PC-3 (cell line): ENCODE measurements at regions of chr10 and their contacts with region 1.

Region 1: GRCh38 chr10:97334370-97335175 is at the start of gene FRAT2:
- DNase-seq: peak; percentile 78
- ATAC-seq: peak; percentile 67
- H3K4me3 ChIP-seq: peak within 1 kb of the TSS; percentile 90
- H3K27ac ChIP-seq: peak within 1 kb of the TSS; percentile 81
- H3K4me1 ChIP-seq: peaks cover 24% of the 10 kb centered on the region
- H3K27me3 ChIP-seq: no peaks in the 10 kb centered on the region
- CTCF ChIP-seq: no peak
- total RNA-seq, gene FRAT2: 19.2 and 26.7 TPM in 2 replicates

Region 2: GRCh38 chr10:97278491-97278989 is 56.0 kb before region 1 on chr10:
- CTCF ChIA-PET with region 1: interaction called, 20 read pairs
- POLR2A ChIA-PET with region 1: interaction called, 10 read pairs
- intact Hi-C with region 1: loop called (anchors 2 kb)
- DNase-seq: peak; percentile 68
- ATAC-seq: peak; percentile 76
- H3K4me3 ChIP-seq: no peak overlapping the region
- H3K27ac ChIP-seq: no peak overlapping the region
- H3K4me1 ChIP-seq: peaks cover 10% of the 10 kb centered on the region
- H3K27me3 ChIP-seq: no peaks in the 10 kb centered on the region
- CTCF ChIP-seq: peak; percentile 63

Region 3: DNA sequence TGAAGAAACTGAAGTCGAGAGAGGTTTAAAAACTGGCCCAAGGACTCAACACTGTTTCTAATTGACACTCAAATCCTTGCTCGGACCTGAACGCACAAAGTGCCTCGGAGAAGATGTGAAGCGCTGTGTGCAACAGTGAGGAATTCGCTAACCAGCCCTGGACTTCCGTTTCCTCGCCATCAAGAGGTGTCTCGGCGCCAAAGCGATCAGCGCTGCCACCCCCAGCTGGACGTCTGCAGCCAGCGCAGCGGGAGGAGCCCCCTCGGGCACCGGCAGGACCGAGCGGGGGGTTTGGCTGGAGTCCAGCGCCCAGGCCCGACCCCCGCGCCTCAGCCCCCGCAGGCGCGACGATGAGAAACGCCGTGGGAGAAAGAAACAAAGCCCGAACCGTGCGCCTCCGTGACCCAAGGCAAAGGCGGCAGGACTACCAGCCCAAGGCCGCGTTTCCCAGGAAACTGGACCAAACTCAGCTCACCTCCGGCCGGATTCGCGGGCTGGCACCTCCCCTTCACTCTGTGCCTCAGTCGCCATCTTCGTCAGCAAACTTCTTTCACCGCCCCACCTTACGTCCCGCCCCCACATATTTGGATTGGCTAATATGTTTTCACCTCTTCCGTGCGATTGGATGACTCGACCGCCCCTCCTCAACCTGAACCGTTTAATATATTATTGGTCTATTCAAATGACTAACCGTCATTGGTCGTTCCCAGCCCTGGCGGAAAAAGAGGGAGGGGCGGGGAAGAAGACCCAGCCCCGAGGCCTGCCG is 42.3 kb before region 1 on chr10 and contains the start of gene ARHGAP19:
- CTCF ChIA-PET with region 1: no interaction called
- POLR2A ChIA-PET with region 1: no interaction called
- intact Hi-C with region 1: loop called (anchors 1 kb)
- DNase-seq: peak; percentile 96
- ATAC-seq: peak; percentile 93
- H3K4me3 ChIP-seq: peak within 1 kb of the TSS; percentile 86
- H3K27ac ChIP-seq: peak within 1 kb of the TSS; percentile 92
- H3K4me1 ChIP-seq: no peaks in the 10 kb centered on the region; the same call in 1 of the 2 replicates
- H3K27me3 ChIP-seq: no peaks in the 10 kb centered on the region
- CTCF ChIP-seq: peak; percentile 30; the same call in 1 of the 2 replicates
- total RNA-seq, gene ARHGAP19: 8.5 and 9.8 TPM in 2 replicates

Region 4: GRCh38 chr10:97445722-97446639 is 111.4 kb after region 1 on chr10 and contains the starts of genes EXOSC1 and ZDHHC16:
- CTCF ChIA-PET with region 1: no interaction called
- POLR2A ChIA-PET with region 1: no interaction called
- intact Hi-C with region 1: loop called (anchors 5 kb)
- DNase-seq: peak; percentile 94
- ATAC-seq: peak; percentile 97
- H3K4me3 ChIP-seq: peak within 1 kb of the TSS; percentile 100
- H3K27ac ChIP-seq: peak within 1 kb of the TSS; percentile 7; the same call in 1 of the 2 replicates
- H3K4me1 ChIP-seq: peaks cover 21% of the 10 kb centered on the region
- H3K27me3 ChIP-seq: no peaks in the 10 kb centered on the region
- CTCF ChIP-seq: no peak
- total RNA-seq, gene EXOSC1: 23.0 and 34.7 TPM in 2 replicates
- total RNA-seq, gene ZDHHC16: 35.1 and 47.1 TPM in 2 replicates